ENCODE measurements at regions of chr11 and their contacts with region 1.

Region 1: GRCh38 chr11:128582496-128583366 is 4.6 kb downstream of the ETS1 start:
- DNase-seq: no peak
- ATAC-seq: peak; percentile 76

Region 2: DNA sequence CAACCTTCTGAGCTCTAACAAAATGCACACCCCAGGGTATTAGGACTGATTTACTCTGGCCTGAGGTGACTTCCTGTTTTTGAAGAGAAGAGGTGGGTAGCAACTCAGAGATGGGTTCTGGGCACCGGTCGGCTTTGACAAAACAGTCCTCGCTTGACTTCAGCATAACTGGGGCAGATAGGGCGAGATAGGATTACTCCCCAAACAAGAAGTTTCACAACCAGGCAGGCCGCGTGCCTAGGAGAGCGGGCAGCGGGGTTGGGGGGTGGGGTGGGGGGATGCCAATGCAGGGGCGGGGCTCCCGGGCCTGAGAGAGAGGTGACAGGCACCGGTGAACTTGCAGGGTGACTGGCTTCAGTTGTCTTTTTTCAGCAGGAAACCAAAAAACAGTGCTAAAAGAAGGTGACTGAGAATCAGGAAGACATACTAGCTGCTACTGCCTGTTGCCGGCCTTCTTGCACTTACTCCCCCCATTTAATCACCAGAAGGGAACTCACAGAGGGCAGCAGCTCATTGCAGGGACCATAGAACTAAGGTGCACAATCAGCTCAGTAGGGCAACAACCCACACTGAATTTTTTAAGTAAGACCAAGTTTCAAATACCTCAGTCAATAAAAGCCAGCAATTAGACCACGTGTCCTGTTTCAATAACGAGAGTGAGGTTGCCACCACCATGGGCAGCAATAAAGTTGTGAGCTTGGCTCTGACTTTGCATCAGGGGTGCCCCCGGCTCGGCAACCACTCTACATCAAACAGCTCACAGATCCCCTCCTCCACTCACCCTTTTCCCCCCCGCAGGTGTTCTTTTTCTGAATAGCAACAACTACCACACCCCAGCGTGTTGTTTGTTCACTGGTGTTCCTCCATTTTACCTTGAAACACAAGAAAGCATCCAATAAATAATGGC is 41.8 kb after region 1 on chr11:
- intact Hi-C with region 1: loop called (anchors 5 kb)
- DNase-seq: no peak
- ATAC-seq: no peak